GM18951 (cell line): ENCODE measurements at regions of chr2 and their contacts with region 1.

Region 1: GRCh38 chr2:198309673-198310280 is 505.4 kb downstream of the PLCL1 start:
- POLR2A ChIP-seq: no peak

Region 2: DNA sequence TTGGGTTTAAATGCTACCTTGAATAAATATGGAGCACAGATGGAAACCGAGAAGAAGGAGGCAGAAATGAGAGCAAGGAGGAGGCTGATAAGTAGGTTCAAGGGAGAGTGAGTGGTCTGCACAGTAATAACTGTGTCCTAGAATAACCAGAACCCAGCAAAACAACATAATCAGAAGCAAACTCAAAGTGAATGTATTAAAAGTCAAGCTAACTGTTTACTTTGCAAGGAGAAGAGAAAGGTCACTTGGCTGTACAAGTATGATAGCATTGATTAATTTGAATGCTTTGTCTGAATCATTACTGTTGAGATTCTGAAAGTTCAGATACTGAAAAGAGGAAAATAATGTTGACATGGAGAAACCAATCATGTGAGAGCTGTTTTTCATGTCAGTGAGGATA is 246.5 kb before region 1 on chr2:
- in situ Hi-C with region 1: no loop called
- POLR2A ChIP-seq: no peak

Region 3: DNA sequence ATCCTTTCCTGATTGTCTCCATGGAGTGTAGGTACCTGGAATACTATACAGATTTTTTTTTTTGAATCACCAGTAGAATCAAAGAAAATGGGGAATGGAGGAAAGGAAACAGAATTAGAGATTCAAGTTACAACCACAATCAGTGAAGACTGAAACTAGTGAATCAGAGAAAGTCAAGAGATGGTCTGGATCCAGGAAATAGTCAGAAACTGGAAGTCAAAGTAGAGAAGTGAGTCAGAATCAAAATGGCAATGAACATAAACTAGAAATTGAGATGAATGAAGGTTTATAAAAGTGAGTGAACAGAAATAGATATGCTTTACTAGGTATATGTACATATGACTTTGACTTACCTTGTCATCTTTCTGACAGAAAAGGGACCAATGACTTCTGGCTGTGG is 73.6 kb after region 1 on chr2:
- in situ Hi-C with region 1: no loop called
- POLR2A ChIP-seq: no peak

Region 4: DNA sequence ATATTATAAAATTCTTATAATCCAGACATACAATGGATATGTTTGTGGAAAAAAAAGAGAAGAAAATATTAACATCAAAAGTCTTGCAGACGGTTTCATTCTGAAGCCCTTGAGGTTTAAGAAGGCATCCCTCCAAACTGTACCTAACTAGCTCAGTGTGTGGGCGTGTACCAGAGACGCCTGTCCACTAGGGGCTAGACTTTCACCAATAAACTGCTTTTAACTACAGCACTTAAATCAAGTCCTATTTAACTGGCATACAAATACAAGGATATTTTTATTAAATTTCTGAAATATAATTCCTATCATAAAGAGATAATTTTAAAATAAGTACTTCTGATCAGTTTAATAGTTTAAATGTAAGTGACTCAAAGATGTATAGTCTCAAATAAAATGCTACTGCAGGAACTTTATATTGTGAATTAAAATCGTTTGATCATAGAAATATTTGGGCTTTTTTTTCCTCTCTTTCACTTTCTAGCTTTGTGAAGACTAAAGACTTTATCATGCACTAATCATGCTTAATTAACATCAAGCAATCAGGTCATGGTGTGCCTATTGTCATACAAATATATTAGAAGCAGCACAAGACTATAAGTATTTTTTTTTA is 710.2 kb after region 1 on chr2:
- in situ Hi-C with region 1: no loop called
- POLR2A ChIP-seq: no peak

Region 5: GRCh38 chr2:199488772-199489400 is 1179.1 kb after region 1 on chr2:
- in situ Hi-C with region 1: loop called (anchors 10 kb)
- POLR2A ChIP-seq: no peak

Region 6: DNA sequence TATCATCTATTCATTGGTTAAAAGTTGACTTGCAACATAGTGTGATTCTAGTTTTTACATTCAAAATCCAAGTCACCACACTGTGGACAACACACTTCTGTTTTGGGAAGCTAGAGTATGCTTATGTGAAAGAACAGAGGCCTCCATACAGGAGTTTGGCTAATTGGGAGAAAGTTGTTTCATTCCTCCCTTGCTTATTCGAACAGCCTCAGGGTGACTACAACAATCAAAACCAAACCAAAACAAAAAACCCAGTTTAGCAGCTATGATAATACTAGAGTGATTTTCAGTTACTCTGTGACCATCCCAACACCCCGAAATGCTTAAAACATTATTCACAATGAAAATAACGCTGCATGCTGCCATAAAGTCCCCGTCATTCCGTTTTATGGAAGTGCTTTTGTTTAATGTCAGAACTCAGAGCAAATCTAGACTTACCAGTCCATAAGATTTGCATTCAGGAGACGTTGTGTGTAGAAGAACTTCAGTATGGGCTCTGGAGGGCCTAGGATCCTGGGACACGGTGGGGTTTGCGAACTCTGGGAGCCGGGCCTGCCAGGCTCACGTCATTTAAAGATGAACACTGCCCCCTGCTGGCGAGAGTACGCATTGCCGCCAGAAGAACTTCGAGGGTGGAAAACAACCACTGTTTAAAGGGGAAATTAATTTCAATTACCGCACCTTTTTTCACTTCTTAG is 1429.8 kb after region 1 on chr2:
- in situ Hi-C with region 1: loop called (anchors 25 kb)
- POLR2A ChIP-seq: no peak